Activated CD4-positive, alpha-beta memory T cell treated with anti-CD3 and anti-CD28 coated beads for 36 hours (primary cell): ENCODE measurements at regions of chr7 and their contacts with region 1.

Region 1: DNA sequence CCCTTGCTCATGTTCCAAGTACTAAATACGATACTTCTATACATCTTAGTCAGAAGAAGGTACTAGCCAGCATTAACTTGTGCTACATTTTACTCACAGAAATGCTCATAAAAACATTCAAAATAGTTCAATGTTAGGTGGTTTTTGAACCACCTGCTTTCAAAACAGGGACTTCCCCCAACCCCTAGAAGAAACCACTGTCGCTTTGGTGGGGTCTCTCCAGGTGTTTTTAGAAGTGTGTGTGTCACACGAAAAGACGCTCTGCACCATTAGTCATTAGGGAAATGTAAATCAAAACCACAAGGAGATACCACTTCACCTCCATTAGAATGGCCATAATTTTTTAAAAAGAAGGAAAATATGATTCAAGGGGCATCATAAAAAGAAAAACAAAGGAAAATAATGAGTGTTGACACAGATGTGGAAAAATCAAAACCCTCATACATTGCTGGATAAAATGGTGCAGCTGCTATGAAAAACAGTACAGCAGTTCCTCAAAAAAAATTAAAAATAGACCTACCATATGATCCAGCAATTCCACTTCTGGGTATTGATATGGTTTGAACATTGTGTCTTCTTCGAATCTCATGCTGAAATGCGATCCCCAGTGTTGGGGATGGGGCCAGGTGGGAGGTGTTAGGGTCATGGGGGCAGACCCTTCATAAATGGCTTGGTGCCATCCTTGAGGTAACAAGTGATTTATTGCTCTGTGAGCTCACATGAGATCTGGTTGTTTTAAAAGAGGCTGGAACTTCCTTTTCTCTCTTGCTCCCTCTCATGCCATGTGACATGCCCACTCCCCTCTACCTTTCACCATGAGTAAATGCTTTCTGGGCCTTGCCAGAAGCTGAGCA is 74.2 kb downstream of the MALSU1 start:
- DNase-seq: peak; percentile 80
- H3K4me3 Mint-ChIP-seq: peak overlapping the region; percentile 17
- H3K27ac Mint-ChIP-seq: peak overlapping the region; percentile 76
- H3K4me1 Mint-ChIP-seq: peaks cover 46% of the 10 kb centered on the region
- H3K27me3 Mint-ChIP-seq: peaks cover 15% of the 10 kb centered on the region

Region 2: DNA sequence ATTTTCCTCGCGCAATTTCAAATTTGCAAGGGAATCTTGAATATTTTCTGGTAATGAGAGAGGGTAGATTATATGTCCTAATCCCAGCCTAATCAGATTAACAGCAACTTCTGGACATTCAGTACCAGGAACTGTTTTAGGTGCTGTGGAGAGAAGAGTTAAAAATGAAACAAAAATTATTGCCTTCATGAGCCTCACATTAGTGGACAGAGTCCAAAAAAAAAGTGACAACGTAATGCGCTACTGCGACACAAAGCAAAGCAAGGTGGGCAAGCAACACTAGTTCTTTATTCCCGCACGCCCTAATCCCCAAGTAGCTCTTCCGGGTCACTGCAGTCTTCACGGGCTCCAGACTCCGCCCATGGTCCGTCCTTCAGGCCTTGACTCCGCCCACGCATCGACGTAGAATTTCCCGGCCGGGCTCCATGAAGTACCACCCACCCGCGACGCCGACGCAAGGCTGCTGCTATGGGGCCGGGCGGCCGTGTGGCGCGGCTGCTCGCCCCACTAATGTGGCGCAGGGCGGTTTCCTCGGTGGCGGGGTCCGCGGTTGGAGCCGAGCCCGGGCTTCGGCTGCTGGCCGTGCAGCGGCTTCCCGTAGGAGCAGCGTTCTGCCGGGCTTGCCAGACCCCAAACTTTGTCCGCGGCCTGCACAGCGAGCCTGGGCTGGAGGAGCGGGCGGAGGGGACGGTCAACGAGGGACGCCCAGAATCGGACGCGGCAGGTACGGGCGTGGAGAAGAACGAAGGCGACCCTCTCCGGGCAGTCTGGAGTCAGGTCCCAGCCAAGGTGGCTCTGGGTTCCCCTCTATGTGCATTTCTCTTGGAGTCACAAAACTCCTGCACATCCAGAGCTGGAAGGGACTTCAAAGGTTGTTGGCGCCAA is 74.3 kb before region 1 on chr7 and contains the start of gene MALSU1:
- CTCF ChIA-PET with region 1: interaction called, 3 read pairs
- POLR2A ChIA-PET with region 1: no interaction called
- intact Hi-C with region 1: loop called (anchors 1 kb)
- DNase-seq: peak; percentile 98
- H3K4me3 Mint-ChIP-seq: peak within 1 kb of the TSS; percentile 96
- H3K27ac Mint-ChIP-seq: peak within 1 kb of the TSS; percentile 97
- H3K4me1 Mint-ChIP-seq: peaks cover 36% of the 10 kb centered on the region
- H3K27me3 Mint-ChIP-seq: peaks cover 3% of the 10 kb centered on the region
- total RNA-seq, gene MALSU1: 100 to 101 TPM

Region 3: GRCh38 chr7:23347682-23348180 is 25.6 kb before region 1 on chr7:
- CTCF ChIA-PET with region 1: no interaction called
- POLR2A ChIA-PET with region 1: interaction called, 4 read pairs
- intact Hi-C with region 1: loop called (anchors 2 kb)
- DNase-seq: no peak
- H3K4me3 Mint-ChIP-seq: no peak overlapping the region
- H3K27ac Mint-ChIP-seq: no peak overlapping the region
- H3K4me1 Mint-ChIP-seq: peaks cover 27% of the 10 kb centered on the region
- H3K27me3 Mint-ChIP-seq: peaks cover 3% of the 10 kb centered on the region

Region 4: DNA sequence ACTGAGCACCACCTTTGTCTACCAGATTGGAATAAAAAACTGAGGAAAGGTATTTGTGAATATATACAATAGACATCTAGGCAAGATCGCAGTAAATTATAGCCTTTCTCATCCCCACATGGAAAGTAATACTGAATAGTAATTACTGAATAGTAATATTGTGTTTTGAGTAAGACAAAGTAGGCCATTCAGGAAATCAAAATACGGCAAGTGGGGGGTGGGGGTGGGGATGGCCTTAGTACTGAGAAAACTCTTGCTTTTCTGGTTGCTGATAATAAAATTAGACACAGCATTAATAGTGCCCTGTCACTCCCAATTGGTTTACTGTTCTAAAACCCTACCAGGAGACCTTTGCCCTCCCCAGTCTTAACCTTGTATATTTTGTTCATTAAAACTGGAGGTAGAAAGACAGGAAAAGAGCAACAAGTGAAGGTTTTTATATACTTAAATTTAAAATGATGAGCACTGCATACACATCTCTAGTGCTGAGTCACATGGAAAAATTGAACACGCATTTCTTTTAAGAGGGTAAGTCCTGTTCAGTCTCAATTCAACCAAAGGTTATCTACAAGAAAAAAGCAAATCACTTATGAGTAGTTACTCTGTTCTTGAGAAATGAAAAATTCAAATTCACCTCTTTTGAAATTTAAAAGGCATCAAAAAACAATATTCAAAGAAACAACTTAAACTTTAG is 31.3 kb after region 1 on chr7:
- CTCF ChIA-PET with region 1: interaction called, 3 read pairs
- POLR2A ChIA-PET with region 1: interaction called, 3 read pairs
- intact Hi-C with region 1: loop called (anchors 1 kb)
- DNase-seq: peak; percentile 51
- H3K4me3 Mint-ChIP-seq: peak overlapping the region; percentile 0
- H3K27ac Mint-ChIP-seq: peak overlapping the region; percentile 90
- H3K4me1 Mint-ChIP-seq: peaks cover 31% of the 10 kb centered on the region
- H3K27me3 Mint-ChIP-seq: peaks cover 5% of the 10 kb centered on the region

Region 5: GRCh38 chr7:23531794-23532489 is 158.6 kb after region 1 on chr7 and contains the start of gene TRA2A:
- CTCF ChIA-PET with region 1: no interaction called
- POLR2A ChIA-PET with region 1: no interaction called
- intact Hi-C with region 1: loop called (anchors 2 kb)
- DNase-seq: peak; percentile 98
- H3K4me3 Mint-ChIP-seq: peak within 1 kb of the TSS; percentile 100
- H3K27ac Mint-ChIP-seq: peak within 1 kb of the TSS; percentile 100
- H3K4me1 Mint-ChIP-seq: peaks cover 38% of the 10 kb centered on the region
- H3K27me3 Mint-ChIP-seq: no peaks in the 10 kb centered on the region
- total RNA-seq, gene TRA2A: 75.4 to 77.8 TPM